Transverse colon (tissue), 4 donors: ENCODE measurements at regions of chr9 and their contacts with region 1.

Region 1: GRCh38 chr9:35179347-35180287 is 17.8 kb downstream of the UNC13B start:
- DNase-seq: no peak
- H3K4me3 ChIP-seq: no peak overlapping the region
- H3K27ac ChIP-seq: peak overlapping the region in 2 of 4 donors; percentile 0 to 29
- H3K4me1 ChIP-seq: peaks cover 7 to 36% (median 23%) of the 10 kb centered on the region in 4 donors
- H3K27me3 ChIP-seq: no peaks in the 10 kb centered on the region
- CTCF ChIP-seq: no peak
- EP300 ChIP-seq: no peak
- POLR2A ChIP-seq: no peak

Region 2: DNA sequence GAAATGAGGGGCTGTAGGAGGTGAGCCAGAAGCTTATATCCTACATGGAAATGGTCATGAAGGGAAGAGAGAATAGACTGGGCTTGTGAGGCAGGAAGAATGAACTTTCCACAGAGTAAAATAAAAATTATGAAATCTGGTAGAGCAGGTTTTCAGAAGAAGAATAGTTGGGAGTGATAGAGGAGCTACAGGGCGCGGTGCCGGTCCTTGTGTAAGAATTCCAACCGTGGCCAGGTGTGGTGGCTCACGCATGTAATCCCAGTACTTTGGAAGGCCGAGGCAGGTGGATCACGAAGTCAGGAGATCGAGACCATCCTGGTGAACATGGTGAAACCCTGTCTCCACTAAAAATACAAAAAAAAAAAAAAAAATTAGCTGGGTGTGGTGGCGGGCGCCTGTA is 26.7 kb before region 1 on chr9:
- in situ Hi-C with region 1: no loop called
- intact Hi-C with region 1: loop called (anchors 2 kb)
- DNase-seq: no peak
- H3K4me3 ChIP-seq: no peak overlapping the region
- H3K27ac ChIP-seq: no peak overlapping the region
- H3K4me1 ChIP-seq: no peaks in the 10 kb centered on the region
- H3K27me3 ChIP-seq: no peaks in the 10 kb centered on the region
- CTCF ChIP-seq: no peak
- EP300 ChIP-seq: no peak
- POLR2A ChIP-seq: no peak

Region 3: DNA sequence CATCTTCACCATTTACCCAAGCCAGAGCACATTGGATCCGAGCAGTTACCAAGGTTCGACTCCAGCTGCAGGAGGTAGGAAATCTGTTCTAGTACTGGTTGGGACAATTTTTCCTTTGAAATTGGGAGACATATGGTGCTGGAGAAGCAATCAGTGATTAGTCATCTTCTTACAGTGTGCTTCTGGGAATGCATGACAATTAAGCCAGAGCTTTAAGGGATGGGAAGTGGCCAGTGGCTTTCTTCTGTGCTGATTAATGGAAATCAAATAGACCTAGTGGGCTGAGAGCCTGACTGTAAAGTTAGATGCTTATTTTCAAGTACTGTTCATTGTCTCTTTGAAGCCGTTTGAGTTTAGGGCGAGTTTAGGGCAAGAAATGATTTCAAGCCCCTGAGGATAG is 134.3 kb after region 1 on chr9:
- in situ Hi-C with region 1: no loop called
- intact Hi-C with region 1: no loop called
- DNase-seq: no peak
- H3K4me3 ChIP-seq: no peak overlapping the region
- H3K27ac ChIP-seq: no peak overlapping the region
- H3K4me1 ChIP-seq: no peaks in the 10 kb centered on the region
- H3K27me3 ChIP-seq: no peaks in the 10 kb centered on the region
- CTCF ChIP-seq: no peak
- EP300 ChIP-seq: no peak
- POLR2A ChIP-seq: no peak